ENCODE measurements at regions of chr13 and their contacts with region 1.

Region 1: GRCh38 chr13:29850224-29850898 is at the start of gene UBL3:
- DNase-seq: peak; percentile 97
- H3K4me3 Mint-ChIP-seq: peak within 1 kb of the TSS; percentile 90
- H3K27ac Mint-ChIP-seq: peak within 1 kb of the TSS; percentile 98
- H3K4me1 Mint-ChIP-seq: peaks cover 46% of the 10 kb centered on the region
- H3K27me3 Mint-ChIP-seq: no peaks in the 10 kb centered on the region
- total RNA-seq, gene UBL3: 15.3 to 15.5 TPM

Region 2: DNA sequence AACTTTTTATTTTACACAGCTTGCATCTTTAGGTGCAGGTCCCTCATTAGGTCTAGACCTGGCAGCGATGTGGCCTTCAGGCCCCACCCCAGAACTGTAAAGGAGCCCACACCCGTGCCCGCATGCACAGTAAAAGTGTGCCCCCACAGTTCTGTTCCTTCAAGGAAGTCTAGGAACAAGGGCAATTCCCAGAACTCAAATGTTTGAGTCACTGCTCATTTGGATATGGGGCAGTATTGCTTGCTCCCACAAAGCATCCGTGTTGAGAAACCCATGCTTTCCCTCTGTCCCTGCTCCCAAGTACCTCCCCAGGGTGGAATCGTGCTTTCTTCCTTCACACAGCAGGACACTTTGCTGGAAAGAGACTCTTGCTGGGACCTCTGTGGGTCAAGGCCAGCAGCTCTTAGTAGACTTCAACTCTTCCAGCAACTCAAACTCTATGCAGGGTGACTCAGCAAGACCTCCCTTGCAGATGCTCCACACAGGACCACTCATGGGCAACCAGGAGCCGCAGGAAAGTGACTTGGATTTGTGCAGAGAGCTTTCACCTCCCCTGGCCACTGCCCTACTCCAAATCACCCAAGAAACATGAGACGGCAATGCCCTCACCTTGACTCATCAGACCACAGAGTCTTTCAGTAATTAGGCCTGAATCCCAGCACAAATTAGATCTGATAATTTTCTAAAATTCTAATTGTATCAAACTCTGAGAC is 267.1 kb before region 1 on chr13:
- CTCF ChIA-PET with region 1: no interaction called
- POLR2A ChIA-PET with region 1: no interaction called
- intact Hi-C with region 1: no loop called
- DNase-seq: no peak
- H3K4me3 Mint-ChIP-seq: no peak overlapping the region
- H3K27ac Mint-ChIP-seq: no peak overlapping the region
- H3K4me1 Mint-ChIP-seq: peaks cover 71% of the 10 kb centered on the region
- H3K27me3 Mint-ChIP-seq: no peaks in the 10 kb centered on the region

Region 3: DNA sequence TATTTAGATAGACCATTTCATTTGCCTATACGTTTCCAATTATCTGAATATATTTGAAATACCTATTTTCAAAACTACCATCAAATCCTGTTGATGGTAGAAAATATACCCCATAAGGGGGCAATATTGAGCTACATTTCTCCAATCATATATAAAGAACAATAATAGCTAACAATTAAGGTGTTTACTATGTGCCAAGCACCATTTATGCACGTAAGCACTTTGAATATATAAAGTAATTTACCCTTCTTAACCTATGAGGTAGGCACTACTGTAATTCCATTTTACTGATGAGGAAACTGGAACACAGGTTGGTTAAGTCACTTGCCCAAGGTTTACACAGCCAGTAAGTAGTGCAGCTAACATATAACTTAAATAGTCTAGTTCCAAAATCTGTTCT is 79.1 kb before region 1 on chr13:
- CTCF ChIA-PET with region 1: interaction called, 19 read pairs
- POLR2A ChIA-PET with region 1: no interaction called
- intact Hi-C with region 1: loop called (anchors 2 kb)
- DNase-seq: no peak
- H3K4me3 Mint-ChIP-seq: no peak overlapping the region
- H3K27ac Mint-ChIP-seq: no peak overlapping the region
- H3K4me1 Mint-ChIP-seq: peaks cover 4% of the 10 kb centered on the region
- H3K27me3 Mint-ChIP-seq: no peaks in the 10 kb centered on the region

Region 4: GRCh38 chr13:29805994-29806979 is 44.1 kb before region 1 on chr13:
- CTCF ChIA-PET with region 1: interaction called, 6 read pairs
- POLR2A ChIA-PET with region 1: interaction called, 3 read pairs
- intact Hi-C with region 1: loop called (anchors 5 kb)
- DNase-seq: peak; percentile 61
- H3K4me3 Mint-ChIP-seq: no peak overlapping the region
- H3K27ac Mint-ChIP-seq: no peak overlapping the region
- H3K4me1 Mint-ChIP-seq: peaks cover 43% of the 10 kb centered on the region
- H3K27me3 Mint-ChIP-seq: no peaks in the 10 kb centered on the region

Region 5: GRCh38 chr13:29902101-29902952 is 52.0 kb after region 1 on chr13:
- CTCF ChIA-PET with region 1: no interaction called
- POLR2A ChIA-PET with region 1: interaction called, 4 read pairs
- intact Hi-C with region 1: loop called (anchors 5 kb)
- DNase-seq: peak; percentile 49
- H3K4me3 Mint-ChIP-seq: peak overlapping the region; percentile 68
- H3K27ac Mint-ChIP-seq: no peak overlapping the region
- H3K4me1 Mint-ChIP-seq: peaks cover 25% of the 10 kb centered on the region
- H3K27me3 Mint-ChIP-seq: no peaks in the 10 kb centered on the region